ENCODE measurements at regions of chr11 and their contacts with region 1.

Region 1: GRCh38 chr11:66579017-66579606 is 10.7 kb upstream of the CTSF start:
- DNase-seq: no peak
- H3K4me3 ChIP-seq: no peak overlapping the region
- H3K27ac ChIP-seq: no peak overlapping the region
- H3K4me1 ChIP-seq: no peaks in the 10 kb centered on the region
- H3K27me3 ChIP-seq: no peaks in the 10 kb centered on the region
- CTCF ChIP-seq: peak; percentile 76 to 84 (median 80)
- POLR2A ChIP-seq: no peak

Region 2: DNA sequence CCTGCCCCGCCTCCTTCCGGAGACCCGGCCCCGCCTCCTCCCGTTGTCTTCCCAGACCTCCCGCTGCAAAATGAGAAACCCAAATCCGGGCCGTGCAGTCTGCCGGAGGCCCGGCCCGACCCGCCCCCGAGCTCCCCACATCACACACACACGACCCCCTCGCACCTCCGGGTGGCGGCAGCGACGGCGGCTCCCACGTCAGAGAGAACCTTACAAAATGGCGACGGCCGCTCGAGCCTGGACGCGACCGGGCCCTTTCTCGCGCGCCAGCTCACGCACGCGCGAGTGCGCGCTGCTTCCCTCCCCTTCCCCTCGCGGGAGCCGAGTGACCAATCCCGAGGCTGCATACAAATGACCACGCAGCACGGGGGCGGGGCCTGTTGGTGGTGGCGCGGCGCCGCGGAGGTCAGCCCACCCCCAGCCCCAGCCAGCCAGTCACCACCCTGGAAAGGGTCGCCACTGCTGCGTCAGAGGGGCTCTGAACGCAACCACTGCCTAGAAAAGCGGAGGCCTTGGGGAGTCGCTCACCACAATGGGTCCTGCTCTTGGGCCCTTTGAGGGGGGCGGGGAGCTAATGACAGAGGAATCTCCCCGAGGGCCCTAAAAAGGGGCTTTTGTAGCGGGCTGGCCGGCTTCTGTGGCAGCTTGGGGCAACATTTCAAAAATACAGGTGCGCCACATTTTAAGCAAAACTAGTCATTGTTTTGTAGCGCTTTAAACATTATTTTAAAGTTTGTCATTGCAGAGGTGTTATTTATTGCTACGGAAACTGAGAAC is 98.7 kb after region 1 on chr11 and contains the start of gene RBM4B:
- intact Hi-C with region 1: loop called (anchors 1 kb)
- DNase-seq: peak in 1 of 2 donors; percentile 95
- H3K4me3 ChIP-seq: peak within 1 kb of the TSS; percentile 66 to 87
- H3K27ac ChIP-seq: peak within 1 kb of the TSS; percentile 93
- H3K4me1 ChIP-seq: peaks cover 36% of the 10 kb centered on the region
- H3K27me3 ChIP-seq: no peaks in the 10 kb centered on the region
- CTCF ChIP-seq: no peak
- POLR2A ChIP-seq: peak in 1 of 2 donors; percentile 48
- total RNA-seq, gene RBM4B: 17.4 TPM